Mammary epithelial cell (primary cell): ENCODE measurements at regions of chr13 and their contacts with region 1.

Region 1: GRCh38 chr13:98484289-98485219 is 92.4 kb downstream of the STK24 start:
- DNase-seq: peak; percentile 99
- H3K4me3 ChIP-seq: peak overlapping the region in 2 of 3 experiments; percentile 11 to 17
- H3K27ac ChIP-seq: peak overlapping the region; percentile 94
- H3K4me1 ChIP-seq: peaks cover 38% of the 10 kb centered on the region
- H3K27me3 ChIP-seq: no peaks in the 10 kb centered on the region
- CTCF ChIP-seq: peak in 1 of 2 donors; percentile 32

Region 2: GRCh38 chr13:98509271-98510155 is 25.0 kb after region 1 on chr13:
- CTCF ChIA-PET with region 1: no interaction called
- dilution Hi-C with region 1: no loop called
- in situ Hi-C with region 1: no loop called
- intact Hi-C with region 1: loop called (anchors 1 kb)
- DNase-seq: peak; percentile 87
- H3K4me3 ChIP-seq: peak overlapping the region in 1 of 3 experiments; percentile 4
- H3K27ac ChIP-seq: peak overlapping the region; percentile 92
- H3K4me1 ChIP-seq: peaks cover 37% of the 10 kb centered on the region
- H3K27me3 ChIP-seq: no peaks in the 10 kb centered on the region
- CTCF ChIP-seq: no peak

Region 3: GRCh38 chr13:98549006-98549727 is 64.6 kb after region 1 on chr13:
- CTCF ChIA-PET with region 1: interaction called, 5 read pairs
- dilution Hi-C with region 1: no loop called
- in situ Hi-C with region 1: no loop called
- intact Hi-C with region 1: loop called (anchors 2 kb)
- DNase-seq: peak; percentile 83
- H3K4me3 ChIP-seq: no peak overlapping the region
- H3K27ac ChIP-seq: peak overlapping the region; percentile 7
- H3K4me1 ChIP-seq: peaks cover 27% of the 10 kb centered on the region
- H3K27me3 ChIP-seq: no peaks in the 10 kb centered on the region
- CTCF ChIP-seq: no peak

Region 4: DNA sequence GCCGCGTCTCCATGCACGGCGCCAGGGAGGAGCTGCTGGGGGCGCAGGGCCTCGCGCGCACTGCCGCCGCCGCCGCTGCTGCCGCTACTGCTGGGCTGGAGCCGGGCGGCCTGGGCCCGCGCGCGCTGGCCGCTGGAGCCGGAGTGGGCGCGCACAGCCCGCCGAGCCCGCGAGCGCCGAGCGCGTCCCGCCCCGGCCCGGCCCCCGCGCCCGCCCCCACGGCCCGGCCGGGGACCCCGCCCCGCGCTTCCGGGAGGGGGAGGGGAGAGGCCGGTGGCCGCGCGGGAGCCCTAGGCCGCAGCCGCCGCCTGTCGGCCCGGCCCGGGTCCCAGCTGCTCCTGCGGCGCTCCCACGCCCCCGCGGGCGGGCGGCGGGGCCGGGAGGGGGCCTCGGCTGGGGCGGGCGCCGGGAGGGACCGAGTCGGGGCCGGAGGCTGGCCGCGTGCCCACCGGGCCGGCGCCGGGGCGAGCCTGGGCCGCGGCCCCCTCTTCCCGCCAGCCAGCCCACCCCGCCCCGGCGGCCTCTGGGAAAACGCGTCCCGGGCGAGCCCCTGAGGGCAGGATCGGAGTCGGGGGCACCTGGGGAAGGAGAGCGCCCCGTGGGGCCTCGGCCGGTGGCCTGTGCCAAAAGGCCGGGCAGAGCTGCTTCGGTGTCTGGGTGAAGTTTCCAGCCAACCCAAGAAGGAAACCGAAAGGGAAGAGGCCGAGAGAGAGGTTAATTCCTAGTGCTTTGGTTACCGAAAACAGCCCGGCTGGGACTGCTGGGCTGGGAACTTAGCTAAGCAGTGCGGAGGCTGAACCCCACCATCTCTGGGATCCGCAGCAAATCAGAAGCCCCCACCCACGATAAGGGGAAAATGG is 92.6 kb after region 1 on chr13 and contains the start of gene STK24:
- CTCF ChIA-PET with region 1: no interaction called
- dilution Hi-C with region 1: loop called (anchors 5 kb)
- in situ Hi-C with region 1: no loop called
- intact Hi-C with region 1: loop called (anchors 5 kb)
- DNase-seq: peak; percentile 66
- H3K4me3 ChIP-seq: peak within 1 kb of the TSS; percentile 64 to 95 (median 76)
- H3K27ac ChIP-seq: peak within 1 kb of the TSS; percentile 82
- H3K4me1 ChIP-seq: peaks cover 31% of the 10 kb centered on the region
- H3K27me3 ChIP-seq: no peaks in the 10 kb centered on the region
- CTCF ChIP-seq: no peak
- total RNA-seq, gene STK24: 114 to 189 TPM

Region 5: GRCh38 chr13:98592362-98592732 is 107.8 kb after region 1 on chr13:
- CTCF ChIA-PET with region 1: no interaction called
- dilution Hi-C with region 1: no loop called
- in situ Hi-C with region 1: no loop called
- intact Hi-C with region 1: no loop called
- DNase-seq: no peak
- H3K4me3 ChIP-seq: no peak overlapping the region
- H3K27ac ChIP-seq: no peak overlapping the region
- H3K4me1 ChIP-seq: no peaks in the 10 kb centered on the region
- H3K27me3 ChIP-seq: no peaks in the 10 kb centered on the region
- CTCF ChIP-seq: no peak